H1 (cell line): ENCODE measurements at regions of chr11 and their contacts with region 1.

Region 1: GRCh38 chr11:45771566-45772448 is 33.1 kb upstream of the SLC35C1 start:
- DNase-seq: peak in 1 of 2 experiments; percentile 94
- H3K4me3 ChIP-seq: peak overlapping the region; percentile 18 to 62 (median 56); a peak in 7 of 8 replicates
- H3K27ac ChIP-seq: no peak overlapping the region
- H3K4me1 ChIP-seq: no peaks in the 10 kb centered on the region; a peak in 1 of 7 replicates
- H3K27me3 ChIP-seq: peaks cover 0 to 6% (median 5%) of the 10 kb centered on the region in 4 experiments; a peak in 6 of 7 replicates
- CTCF ChIP-seq: peak; percentile 86 to 95 (median 91)
- EP300 ChIP-seq: no peak
- POLR2A ChIP-seq: no peak
- RAD21 ChIP-seq: peak; percentile 96 to 98

Region 2: DNA sequence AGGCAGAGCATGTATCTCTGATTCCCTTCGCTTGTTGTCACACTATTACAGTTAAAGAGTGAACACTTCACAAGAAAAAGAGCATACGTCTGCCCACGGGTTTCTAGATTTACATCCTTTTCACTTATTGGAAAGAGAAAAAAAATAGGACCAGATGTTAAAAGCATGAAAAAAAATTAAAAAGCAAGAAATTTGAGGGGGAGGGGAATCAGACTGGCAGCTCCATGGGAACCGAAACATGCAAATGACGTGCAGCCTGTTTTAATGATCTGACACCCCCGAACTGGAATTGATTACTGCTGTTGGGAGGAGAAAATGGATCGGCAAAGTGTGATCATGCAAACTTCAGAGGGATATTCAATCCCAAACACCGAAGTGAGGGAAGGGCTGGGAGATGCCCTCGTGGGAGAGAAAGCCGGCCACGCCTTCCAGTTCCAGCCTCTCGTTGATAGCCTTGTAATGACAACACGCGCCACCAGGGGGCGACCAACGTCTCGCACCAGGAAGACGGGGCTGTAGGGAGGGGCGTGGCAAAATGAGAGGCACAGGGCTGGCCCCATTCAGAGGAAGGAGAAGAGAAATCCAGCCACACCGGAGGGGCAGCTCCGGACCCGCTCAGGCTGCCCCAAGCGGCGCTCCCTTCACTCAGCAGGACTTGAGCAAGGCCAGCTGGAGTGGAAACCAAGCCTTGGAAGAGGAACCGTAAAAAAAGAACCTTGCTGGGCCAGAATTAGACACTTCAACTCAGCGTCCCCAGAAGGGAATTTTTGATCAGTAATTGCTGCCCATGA is 431.9 kb before region 1 on chr11:
- CTCF ChIA-PET with region 1: interaction called, 18 read pairs
- POLR2A ChIA-PET with region 1: no interaction called
- DNase-seq: peak; percentile 94 to 100
- H3K4me3 ChIP-seq: peak overlapping the region in 3 of 4 experiments; percentile 16 to 50 (median 25); a peak in 3 of 8 replicates
- H3K27ac ChIP-seq: no peak overlapping the region
- H3K4me1 ChIP-seq: peaks cover 0 to 5% (median 4%) of the 10 kb centered on the region in 4 experiments; a peak in 4 of 7 replicates
- H3K27me3 ChIP-seq: no peaks in the 10 kb centered on the region
- CTCF ChIP-seq: peak; percentile 80 to 90 (median 85)
- EP300 ChIP-seq: no peak
- POLR2A ChIP-seq: no peak
- RAD21 ChIP-seq: peak; percentile 64 to 73

Region 3: DNA sequence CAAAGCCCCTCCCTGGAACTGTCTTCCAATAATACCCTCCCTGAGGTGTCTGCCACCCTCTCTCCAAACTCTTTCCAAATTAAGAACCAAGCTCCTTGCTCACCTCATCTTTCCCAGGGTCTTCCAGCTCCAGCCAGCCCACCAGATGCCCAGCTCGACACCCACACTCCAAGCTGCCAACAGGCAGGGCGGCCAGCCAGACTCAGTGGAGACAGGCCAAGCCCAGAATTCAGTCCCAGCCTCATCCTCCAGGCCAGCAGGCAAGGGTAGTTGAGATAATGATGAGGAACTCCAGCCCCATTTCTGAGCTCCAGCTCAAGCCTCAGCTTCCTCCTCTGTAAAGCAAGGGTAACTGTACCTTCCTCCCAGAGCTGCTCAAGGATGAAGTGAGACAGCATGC is 239.3 kb before region 1 on chr11:
- CTCF ChIA-PET with region 1: interaction called, 13 read pairs
- POLR2A ChIA-PET with region 1: no interaction called
- DNase-seq: no peak
- H3K4me3 ChIP-seq: no peak overlapping the region
- H3K27ac ChIP-seq: no peak overlapping the region
- H3K4me1 ChIP-seq: no peaks in the 10 kb centered on the region
- H3K27me3 ChIP-seq: no peaks in the 10 kb centered on the region
- CTCF ChIP-seq: no peak
- EP300 ChIP-seq: no peak
- POLR2A ChIP-seq: no peak
- RAD21 ChIP-seq: no peak

Region 4: GRCh38 chr11:45676522-45677095 is 95.2 kb before region 1 on chr11:
- CTCF ChIA-PET with region 1: interaction called, 23 read pairs
- POLR2A ChIA-PET with region 1: no interaction called
- DNase-seq: no peak
- H3K4me3 ChIP-seq: no peak overlapping the region
- H3K27ac ChIP-seq: no peak overlapping the region
- H3K4me1 ChIP-seq: peaks cover 0 to 7% (median 2%) of the 10 kb centered on the region in 4 experiments; a peak in 3 of 7 replicates
- H3K27me3 ChIP-seq: no peaks in the 10 kb centered on the region; a peak in 1 of 7 replicates
- CTCF ChIP-seq: no peak
- EP300 ChIP-seq: no peak
- POLR2A ChIP-seq: no peak
- RAD21 ChIP-seq: no peak

Region 5: DNA sequence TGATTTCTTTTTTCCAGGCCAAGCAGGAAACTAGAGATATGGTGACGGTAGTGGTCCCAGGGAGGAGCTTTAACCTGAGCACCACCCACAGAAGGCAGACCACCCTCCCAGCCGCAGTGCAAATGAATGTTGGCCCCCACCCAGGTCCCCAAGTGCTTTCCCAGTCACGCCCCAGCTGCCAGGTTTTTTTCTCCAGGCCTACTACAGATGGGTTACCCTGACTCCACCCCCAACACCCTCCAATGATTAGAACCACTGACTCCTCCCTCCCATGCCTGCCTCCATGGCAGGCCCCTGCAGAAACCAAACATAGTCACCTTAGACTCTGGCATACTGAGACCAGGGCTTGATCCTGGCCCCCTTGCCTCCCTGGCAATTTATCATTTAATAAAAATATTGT is 47.7 kb before region 1 on chr11:
- CTCF ChIA-PET with region 1: interaction called, 29 read pairs
- POLR2A ChIA-PET with region 1: no interaction called
- DNase-seq: no peak
- H3K4me3 ChIP-seq: no peak overlapping the region
- H3K27ac ChIP-seq: no peak overlapping the region
- H3K4me1 ChIP-seq: peaks cover 4 to 14% (median 10%) of the 10 kb centered on the region in 4 experiments; a peak in 6 of 7 replicates
- H3K27me3 ChIP-seq: no peaks in the 10 kb centered on the region; a peak in 1 of 7 replicates
- CTCF ChIP-seq: no peak
- EP300 ChIP-seq: no peak
- POLR2A ChIP-seq: no peak
- RAD21 ChIP-seq: no peak

Region 6: DNA sequence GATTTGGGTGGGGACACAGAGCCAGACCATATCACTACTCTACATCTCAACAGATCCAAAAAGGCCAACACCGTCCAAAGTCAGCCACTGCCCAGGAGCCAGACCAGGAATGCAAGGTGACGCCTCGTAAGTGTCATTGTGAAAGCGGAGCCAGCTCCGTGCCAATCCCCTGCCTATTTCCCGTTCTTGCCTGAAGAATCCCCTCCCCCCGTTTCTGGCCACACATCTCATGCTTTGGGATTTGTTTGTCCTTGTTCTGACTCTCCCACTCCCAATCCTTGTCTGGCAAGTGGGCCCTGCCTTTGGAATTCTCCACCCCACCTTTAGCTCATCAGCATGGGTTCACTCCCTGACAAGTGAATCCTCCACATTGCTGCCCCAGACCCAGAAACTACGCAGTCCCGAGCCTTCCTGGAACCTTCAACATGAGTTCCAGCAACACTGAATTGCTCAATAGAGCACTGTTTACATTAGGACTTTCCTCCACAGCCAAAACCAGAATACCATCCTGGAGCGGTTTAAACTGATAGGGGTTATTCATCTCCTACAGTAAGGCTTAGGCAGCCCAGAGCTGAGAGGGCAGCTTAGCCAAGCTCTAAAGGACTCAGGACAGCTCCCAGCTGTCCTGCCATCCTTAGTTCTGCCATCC is 27.1 kb after region 1 on chr11:
- CTCF ChIA-PET with region 1: interaction called, 11 read pairs
- POLR2A ChIA-PET with region 1: interaction called, 4 read pairs
- DNase-seq: peak in 1 of 2 experiments; percentile 39
- H3K4me3 ChIP-seq: no peak overlapping the region
- H3K27ac ChIP-seq: no peak overlapping the region
- H3K4me1 ChIP-seq: no peaks in the 10 kb centered on the region; a peak in 1 of 7 replicates
- H3K27me3 ChIP-seq: peaks cover 6 to 19% (median 12%) of the 10 kb centered on the region in 4 experiments
- CTCF ChIP-seq: no peak
- EP300 ChIP-seq: no peak
- POLR2A ChIP-seq: no peak
- RAD21 ChIP-seq: no peak

Region 7: GRCh38 chr11:45879803-45880686 is 108.2 kb after region 1 on chr11:
- CTCF ChIA-PET with region 1: no interaction called
- POLR2A ChIA-PET with region 1: no interaction called
- DNase-seq: no peak
- H3K4me3 ChIP-seq: no peak overlapping the region
- H3K27ac ChIP-seq: no peak overlapping the region
- H3K4me1 ChIP-seq: peaks cover 8 to 16% (median 12%) of the 10 kb centered on the region in 4 experiments; a peak in 6 of 7 replicates
- H3K27me3 ChIP-seq: no peaks in the 10 kb centered on the region; a peak in 2 of 7 replicates
- CTCF ChIP-seq: no peak
- EP300 ChIP-seq: no peak
- POLR2A ChIP-seq: no peak
- RAD21 ChIP-seq: no peak

Region 8: GRCh38 chr11:45982656-45983470 is 211.1 kb after region 1 on chr11:
- CTCF ChIA-PET with region 1: no interaction called
- POLR2A ChIA-PET with region 1: no interaction called
- DNase-seq: peak; percentile 60 to 84
- H3K4me3 ChIP-seq: peak overlapping the region in 1 of 4 experiments; percentile 40; a peak in 4 of 8 replicates
- H3K27ac ChIP-seq: peak overlapping the region; percentile 58; the same call in 1 of the 2 replicates
- H3K4me1 ChIP-seq: peaks cover 5 to 9% (median 9%) of the 10 kb centered on the region in 4 experiments; a peak in 5 of 7 replicates
- H3K27me3 ChIP-seq: no peaks in the 10 kb centered on the region
- CTCF ChIP-seq: no peak
- EP300 ChIP-seq: no peak
- POLR2A ChIP-seq: no peak
- RAD21 ChIP-seq: no peak

Region 9: DNA sequence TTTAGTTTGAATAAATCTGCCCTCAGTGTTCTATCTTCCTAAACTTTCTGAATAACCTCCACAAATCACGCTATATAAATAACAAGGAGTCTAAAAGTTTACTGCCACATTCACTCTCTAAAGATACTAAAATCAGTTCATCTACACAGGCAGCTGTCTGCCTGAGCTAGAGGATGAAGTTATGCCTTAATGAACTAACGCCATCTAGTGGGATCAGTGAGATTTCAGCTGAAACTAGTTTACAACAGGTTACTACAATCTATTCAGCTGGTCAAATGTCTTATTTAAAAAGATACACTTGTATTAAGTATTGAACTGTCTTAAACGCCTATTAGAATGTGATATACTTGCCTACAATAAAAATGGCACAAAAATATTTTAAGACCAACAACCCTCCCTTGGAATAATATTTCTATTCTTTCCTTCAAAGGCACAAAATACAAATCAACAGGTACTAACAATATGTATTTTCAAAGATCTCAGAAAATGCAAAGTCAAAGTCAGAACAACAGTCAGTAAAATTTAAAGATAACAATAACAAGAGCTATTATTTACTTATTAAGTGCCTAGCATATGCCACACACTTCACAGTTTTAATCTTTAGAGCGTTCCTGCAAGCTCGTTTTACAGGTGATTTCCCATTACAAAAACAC is 234.7 kb after region 1 on chr11:
- CTCF ChIA-PET with region 1: no interaction called
- POLR2A ChIA-PET with region 1: no interaction called
- DNase-seq: no peak
- H3K4me3 ChIP-seq: no peak overlapping the region
- H3K27ac ChIP-seq: no peak overlapping the region
- H3K4me1 ChIP-seq: peaks cover 0 to 6% (median 2%) of the 10 kb centered on the region in 4 experiments; a peak in 2 of 7 replicates
- H3K27me3 ChIP-seq: no peaks in the 10 kb centered on the region
- CTCF ChIP-seq: peak in 2 of 3 experiments; percentile 77 to 79; a peak in 3 of 4 replicates
- EP300 ChIP-seq: no peak
- POLR2A ChIP-seq: no peak
- RAD21 ChIP-seq: peak; percentile 89 to 95

Region 10: DNA sequence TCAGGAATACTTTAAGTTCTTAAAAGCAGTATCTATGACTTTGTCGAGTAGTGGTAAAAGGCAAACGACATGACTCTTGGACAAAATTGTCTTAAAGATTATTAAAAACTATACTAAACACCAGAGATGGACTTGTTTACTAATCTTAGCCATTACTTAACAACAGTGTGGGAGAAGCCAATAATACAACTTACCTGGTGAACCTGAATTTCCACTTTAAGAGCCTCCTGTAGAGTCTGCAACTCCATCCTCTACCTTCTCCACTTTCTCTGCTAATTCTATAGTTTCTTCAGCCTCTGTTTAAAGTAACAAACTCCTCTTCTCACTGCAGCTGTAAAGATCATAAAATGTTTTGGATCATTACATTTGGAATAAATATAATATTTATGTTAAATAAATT is 312.2 kb after region 1 on chr11:
- CTCF ChIA-PET with region 1: no interaction called
- POLR2A ChIA-PET with region 1: no interaction called
- DNase-seq: no peak
- H3K4me3 ChIP-seq: no peak overlapping the region
- H3K27ac ChIP-seq: no peak overlapping the region
- H3K4me1 ChIP-seq: no peaks in the 10 kb centered on the region
- H3K27me3 ChIP-seq: no peaks in the 10 kb centered on the region
- CTCF ChIP-seq: no peak
- EP300 ChIP-seq: no peak
- POLR2A ChIP-seq: no peak
- RAD21 ChIP-seq: no peak